ENCODE measurements at regions of chr1 and their contacts with region 1.

Region 1: GRCh38 chr1:160837558-160838205 is 25.0 kb downstream of the CD244 start:
- DNase-seq: peak; percentile 89
- H3K4me3 Mint-ChIP-seq: peak overlapping the region; percentile 9
- H3K27ac Mint-ChIP-seq: peak overlapping the region; percentile 89
- H3K4me1 Mint-ChIP-seq: peaks cover 43% of the 10 kb centered on the region
- H3K27me3 Mint-ChIP-seq: no peaks in the 10 kb centered on the region

Region 2: GRCh38 chr1:160768295-160768657 is 69.4 kb before region 1 on chr1:
- CTCF ChIA-PET with region 1: interaction called, 24 read pairs
- POLR2A ChIA-PET with region 1: no interaction called
- intact Hi-C with region 1: no loop called
- DNase-seq: peak; percentile 93
- H3K4me3 Mint-ChIP-seq: peak overlapping the region; percentile 78
- H3K27ac Mint-ChIP-seq: peak overlapping the region; percentile 96
- H3K4me1 Mint-ChIP-seq: peaks cover 28% of the 10 kb centered on the region
- H3K27me3 Mint-ChIP-seq: no peaks in the 10 kb centered on the region

Region 3: GRCh38 chr1:160813215-160813614 is 24.5 kb before region 1 on chr1:
- CTCF ChIA-PET with region 1: interaction called, 11 read pairs
- POLR2A ChIA-PET with region 1: interaction called, 3 read pairs
- intact Hi-C with region 1: no loop called
- DNase-seq: peak; percentile 33
- H3K4me3 Mint-ChIP-seq: no peak overlapping the region
- H3K27ac Mint-ChIP-seq: no peak overlapping the region
- H3K4me1 Mint-ChIP-seq: peaks cover 38% of the 10 kb centered on the region
- H3K27me3 Mint-ChIP-seq: no peaks in the 10 kb centered on the region

Region 4: DNA sequence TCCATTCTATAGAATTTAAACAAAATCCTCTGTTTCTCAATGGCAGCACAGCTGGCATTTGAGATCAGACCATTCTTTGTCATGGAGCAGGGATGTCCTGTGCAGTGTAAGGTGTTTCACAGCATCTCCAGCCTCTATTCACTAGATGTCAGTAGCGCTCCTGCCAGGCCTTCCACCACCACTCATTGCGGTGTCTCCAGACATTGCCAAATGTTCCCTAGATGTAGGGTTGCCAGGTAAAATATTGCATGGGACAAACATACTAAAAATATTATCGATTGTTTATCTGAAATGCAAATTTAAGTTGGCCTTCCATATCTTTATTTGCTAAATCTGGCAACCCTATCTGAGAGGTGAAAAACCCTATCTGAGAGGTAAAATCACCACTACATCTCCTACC is 105.2 kb after region 1 on chr1:
- CTCF ChIA-PET with region 1: interaction called, 11 read pairs
- POLR2A ChIA-PET with region 1: no interaction called
- intact Hi-C with region 1: no loop called
- DNase-seq: no peak
- H3K4me3 Mint-ChIP-seq: no peak overlapping the region
- H3K27ac Mint-ChIP-seq: no peak overlapping the region
- H3K4me1 Mint-ChIP-seq: no peaks in the 10 kb centered on the region
- H3K27me3 Mint-ChIP-seq: no peaks in the 10 kb centered on the region

Region 5: DNA sequence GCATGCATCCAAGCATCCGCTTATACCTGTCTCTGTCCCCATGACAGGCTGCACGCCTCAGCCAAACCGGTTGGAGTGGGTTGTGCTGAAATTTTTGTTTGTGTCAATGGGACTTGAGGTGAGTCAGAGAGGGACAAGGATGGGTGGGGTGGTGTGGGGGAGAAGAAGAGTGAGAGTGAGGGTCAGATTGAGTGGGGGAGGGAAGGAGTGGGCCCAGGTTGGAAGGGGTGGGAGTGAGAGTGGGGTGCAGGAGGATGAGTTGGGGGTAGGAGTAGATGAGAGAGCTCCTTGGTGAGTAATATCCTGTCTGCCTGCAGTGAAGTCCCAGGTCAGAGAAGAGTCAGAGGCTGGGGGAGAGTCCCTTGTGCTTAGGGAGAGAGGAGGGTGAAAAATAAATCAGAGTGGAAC is 254.9 kb after region 1 on chr1:
- CTCF ChIA-PET with region 1: interaction called, 19 read pairs
- POLR2A ChIA-PET with region 1: no interaction called
- intact Hi-C with region 1: loop called (anchors 5 kb)
- DNase-seq: peak; percentile 76
- H3K4me3 Mint-ChIP-seq: no peak overlapping the region
- H3K27ac Mint-ChIP-seq: peak overlapping the region; percentile 70
- H3K4me1 Mint-ChIP-seq: peaks cover 52% of the 10 kb centered on the region
- H3K27me3 Mint-ChIP-seq: no peaks in the 10 kb centered on the region